ENCODE measurements at regions of chr3 and their contacts with region 1.

Region 1: GRCh38 chr3:32296256-32297204 is 58.0 kb downstream of the CMTM8 start:
- DNase-seq: no peak
- H3K4me3 ChIP-seq: no peak overlapping the region
- H3K27me3 ChIP-seq: no peaks in the 10 kb centered on the region
- CTCF ChIP-seq: peak; percentile 86

Region 2: DNA sequence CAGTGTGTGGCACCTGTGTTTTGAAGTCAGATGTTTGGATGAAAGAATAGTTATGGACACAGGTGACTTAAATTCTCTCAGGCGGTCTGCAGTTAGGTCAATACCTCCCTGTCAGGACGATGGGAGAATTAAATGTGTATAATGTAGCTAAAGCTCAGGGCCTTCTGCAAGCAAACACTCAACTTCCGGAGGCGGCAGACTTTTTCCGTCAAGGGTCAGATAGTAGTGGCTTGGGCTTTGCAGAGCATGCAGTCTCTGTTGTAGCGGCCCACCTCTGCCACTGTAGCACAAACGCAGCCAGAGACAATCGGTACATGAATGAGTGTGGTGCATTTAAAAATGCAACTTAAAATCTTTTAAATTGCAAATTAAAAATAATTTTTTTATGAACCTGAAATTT is 10.6 kb before region 1 on chr3:
- CTCF ChIA-PET with region 1: interaction called, 16 read pairs
- POLR2A ChIA-PET with region 1: no interaction called
- DNase-seq: no peak
- H3K4me3 ChIP-seq: no peak overlapping the region
- H3K27me3 ChIP-seq: peaks cover 4% of the 10 kb centered on the region; the same call in 1 of the 2 replicates
- CTCF ChIP-seq: no peak

Region 3: GRCh38 chr3:32992322-32992692 is 695.8 kb after region 1 on chr3:
- CTCF ChIA-PET with region 1: no interaction called
- POLR2A ChIA-PET with region 1: interaction called, 11 read pairs
- DNase-seq: no peak
- H3K4me3 ChIP-seq: no peak overlapping the region
- H3K27me3 ChIP-seq: no peaks in the 10 kb centered on the region
- CTCF ChIP-seq: no peak

Measured in BJ (cell line).